Sigmoid colon (tissue), 7 donors: ENCODE measurements at regions of chr14 and their contacts with region 1.

Region 1: GRCh38 chr14:68401855-68402254 is 391.0 kb downstream of the ZFP36L1 start:
- DNase-seq: no peak
- H3K4me3 ChIP-seq: no peak overlapping the region
- H3K27ac ChIP-seq: peak overlapping the region in 1 of 4 donors; percentile 74
- H3K4me1 ChIP-seq: peaks cover 0 to 68% (median 45%) of the 10 kb centered on the region in 4 donors
- H3K27me3 ChIP-seq: no peaks in the 10 kb centered on the region
- CTCF ChIP-seq: no peak
- EP300 ChIP-seq: no peak
- POLR2A ChIP-seq: no peak

Region 2: DNA sequence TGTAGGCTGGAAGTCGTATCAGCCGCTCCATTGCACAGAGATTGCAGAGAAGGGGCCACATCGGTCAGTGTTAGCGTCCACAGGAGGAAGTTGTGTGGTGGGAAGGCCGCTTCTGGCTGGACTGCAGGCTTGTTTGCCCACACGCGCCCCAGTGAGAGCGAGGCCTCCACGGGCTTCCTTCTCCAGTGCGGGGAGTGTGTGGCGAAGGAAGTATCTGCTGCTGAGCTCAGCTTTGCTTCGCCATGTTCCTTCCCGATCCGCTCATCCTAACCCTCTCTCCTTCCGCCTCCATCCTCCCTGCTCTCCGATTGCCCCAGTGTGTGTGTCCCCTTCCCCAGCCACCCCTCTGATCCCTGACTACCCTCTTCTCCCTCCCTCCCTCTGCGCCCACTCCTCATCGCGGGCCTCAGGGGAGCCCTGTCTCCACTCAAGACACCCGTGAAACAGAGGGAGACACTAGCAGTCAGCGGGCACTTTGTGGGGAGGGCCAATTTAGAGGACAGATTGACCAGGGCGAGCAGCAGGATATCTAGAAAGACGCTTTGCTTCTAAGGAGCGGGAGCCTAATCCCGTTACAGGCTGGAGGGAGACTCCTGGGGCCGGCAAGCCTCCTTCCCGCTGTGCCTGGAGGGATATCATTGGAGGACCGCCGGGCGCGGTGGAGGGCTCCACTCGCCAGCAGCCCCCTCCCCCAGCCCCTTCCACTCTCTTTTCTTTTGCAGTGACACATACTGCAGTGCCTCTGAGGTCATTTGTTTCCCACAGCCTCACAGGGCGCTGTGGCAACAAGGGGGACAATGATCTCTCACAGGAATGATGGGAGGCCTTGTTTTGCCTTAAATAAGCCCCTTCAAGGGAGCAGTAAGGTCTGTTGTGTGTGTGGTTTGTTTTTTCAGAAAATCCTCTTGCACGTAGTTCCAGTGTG is 37.8 kb before region 1 on chr14:
- intact Hi-C with region 1: no loop called
- DNase-seq: peak; percentile 74
- H3K4me3 ChIP-seq: no peak overlapping the region
- H3K27ac ChIP-seq: peak overlapping the region; percentile 68 to 80 (median 74)
- H3K4me1 ChIP-seq: peaks cover 0 to 68% (median 46%) of the 10 kb centered on the region in 4 donors
- H3K27me3 ChIP-seq: no peaks in the 10 kb centered on the region
- CTCF ChIP-seq: no peak
- EP300 ChIP-seq: no peak
- POLR2A ChIP-seq: no peak

Region 3: GRCh38 chr14:68444449-68445168 is 42.8 kb after region 1 on chr14:
- intact Hi-C with region 1: loop called (anchors 5 kb)
- DNase-seq: no peak
- H3K4me3 ChIP-seq: no peak overlapping the region
- H3K27ac ChIP-seq: peak overlapping the region in 2 of 4 donors; percentile 17 to 22
- H3K4me1 ChIP-seq: peaks cover 2 to 68% (median 43%) of the 10 kb centered on the region in 4 donors
- H3K27me3 ChIP-seq: no peaks in the 10 kb centered on the region
- CTCF ChIP-seq: no peak
- EP300 ChIP-seq: no peak
- POLR2A ChIP-seq: no peak

Region 4: DNA sequence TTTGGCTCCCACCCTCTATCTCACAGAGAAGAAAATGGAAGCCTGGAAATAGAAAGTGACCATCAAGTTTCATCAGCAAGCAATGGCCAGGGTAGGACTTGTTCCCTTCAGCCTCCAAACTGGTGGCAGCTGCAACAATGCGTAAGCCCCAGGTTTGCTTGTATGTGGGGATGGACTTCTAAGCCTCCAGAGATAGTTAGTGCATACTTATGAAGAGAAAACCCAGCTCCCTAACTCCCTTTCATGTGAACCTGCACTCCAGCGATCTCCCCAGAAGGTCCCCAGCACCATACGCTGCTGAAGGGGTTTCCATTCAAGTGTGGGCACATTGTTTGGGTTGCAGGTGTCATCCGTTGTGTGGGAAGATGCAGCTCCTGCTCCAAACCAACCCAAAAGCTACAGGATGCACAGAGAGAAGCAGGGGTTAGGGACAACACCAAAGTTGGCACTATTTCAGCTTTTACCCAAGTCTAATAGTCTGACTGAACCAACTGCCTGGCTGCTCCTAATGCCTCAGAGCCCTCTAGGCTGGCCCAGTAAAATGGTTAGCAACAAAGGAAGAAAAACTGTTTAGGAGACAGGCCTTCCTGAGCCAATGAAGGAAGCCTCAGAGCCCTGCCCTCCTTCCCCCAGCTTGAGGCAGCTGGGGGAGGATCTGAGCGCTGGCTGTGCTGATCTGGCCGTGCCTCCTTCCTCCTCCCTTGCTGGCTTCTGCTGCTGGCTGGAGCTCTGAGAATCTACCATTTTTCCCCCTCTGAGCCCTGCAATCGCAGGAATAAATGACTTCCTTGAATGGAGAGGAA is 378.7 kb after region 1 on chr14:
- intact Hi-C with region 1: loop called (anchors 5 kb)
- DNase-seq: peak; percentile 91
- H3K4me3 ChIP-seq: no peak overlapping the region
- H3K27ac ChIP-seq: peak overlapping the region; percentile 73 to 99 (median 80)
- H3K4me1 ChIP-seq: peaks cover 0 to 49% (median 46%) of the 10 kb centered on the region in 4 donors
- H3K27me3 ChIP-seq: no peaks in the 10 kb centered on the region
- CTCF ChIP-seq: no peak
- EP300 ChIP-seq: no peak
- POLR2A ChIP-seq: no peak